Calu3 (cell line): ENCODE measurements at regions of chr11 and their contacts with region 1.

Region 1: DNA sequence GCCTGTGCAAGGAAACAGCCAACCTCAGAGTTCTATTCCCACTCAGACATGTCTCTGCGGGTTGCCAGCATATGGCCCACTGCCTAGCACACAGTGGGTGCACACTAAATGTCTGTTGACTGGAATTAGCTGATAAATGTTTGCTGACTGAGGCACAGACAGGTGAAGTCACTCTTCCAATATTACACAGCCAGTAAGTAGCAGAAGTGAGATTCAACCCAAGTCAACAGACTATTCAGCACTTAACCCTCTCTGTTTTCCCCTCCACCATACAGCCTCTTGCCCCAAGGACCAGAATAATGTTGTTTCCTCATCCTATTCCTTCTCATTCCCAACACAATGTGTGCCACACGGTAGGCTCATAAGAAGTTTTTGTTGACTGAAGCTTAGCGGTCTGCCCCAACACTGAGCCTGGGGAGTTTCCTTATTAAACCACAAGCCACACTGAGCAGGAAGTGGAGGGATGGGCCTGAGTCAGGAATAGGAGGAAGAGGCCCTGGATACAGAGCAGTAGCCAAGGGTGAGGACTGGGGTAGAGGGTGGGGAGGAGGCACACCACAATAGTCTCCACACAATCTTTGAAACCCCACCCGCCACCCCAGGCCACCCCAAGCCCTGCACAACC is 15.7 kb upstream of the IL10RA start:
- DNase-seq: peak; percentile 45
- H3K4me3 Mint-ChIP-seq: no peak overlapping the region
- H3K27ac Mint-ChIP-seq: no peak overlapping the region
- H3K4me1 Mint-ChIP-seq: peaks cover 9% of the 10 kb centered on the region
- H3K27me3 Mint-ChIP-seq: no peaks in the 10 kb centered on the region
- CTCF ChIP-seq: no peak

Region 2: DNA sequence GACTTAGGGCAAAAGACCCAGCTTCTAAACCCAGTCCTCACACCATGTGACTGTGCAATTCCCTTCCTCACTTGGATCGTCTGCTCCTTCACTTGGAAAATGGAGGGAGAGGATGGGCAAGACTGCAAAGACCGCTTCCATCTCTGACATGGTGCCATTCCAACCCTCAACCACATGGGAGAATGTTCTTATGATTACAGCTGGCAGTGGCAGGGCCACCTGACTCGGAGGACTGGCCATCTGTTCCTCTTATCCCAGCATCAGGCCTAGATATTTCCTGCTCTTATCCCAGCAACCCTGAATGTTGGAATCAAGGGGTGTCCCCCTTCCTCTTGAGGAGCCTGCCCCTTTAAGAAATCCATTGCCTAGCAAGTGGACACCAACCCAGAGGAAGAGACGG is 188.9 kb before region 1 on chr11:
- CTCF ChIA-PET with region 1: no interaction called
- intact Hi-C with region 1: no loop called
- DNase-seq: no peak
- H3K4me3 Mint-ChIP-seq: no peak overlapping the region
- H3K27ac Mint-ChIP-seq: no peak overlapping the region
- H3K4me1 Mint-ChIP-seq: no peaks in the 10 kb centered on the region
- H3K27me3 Mint-ChIP-seq: peaks cover 92% of the 10 kb centered on the region
- CTCF ChIP-seq: no peak

Region 3: DNA sequence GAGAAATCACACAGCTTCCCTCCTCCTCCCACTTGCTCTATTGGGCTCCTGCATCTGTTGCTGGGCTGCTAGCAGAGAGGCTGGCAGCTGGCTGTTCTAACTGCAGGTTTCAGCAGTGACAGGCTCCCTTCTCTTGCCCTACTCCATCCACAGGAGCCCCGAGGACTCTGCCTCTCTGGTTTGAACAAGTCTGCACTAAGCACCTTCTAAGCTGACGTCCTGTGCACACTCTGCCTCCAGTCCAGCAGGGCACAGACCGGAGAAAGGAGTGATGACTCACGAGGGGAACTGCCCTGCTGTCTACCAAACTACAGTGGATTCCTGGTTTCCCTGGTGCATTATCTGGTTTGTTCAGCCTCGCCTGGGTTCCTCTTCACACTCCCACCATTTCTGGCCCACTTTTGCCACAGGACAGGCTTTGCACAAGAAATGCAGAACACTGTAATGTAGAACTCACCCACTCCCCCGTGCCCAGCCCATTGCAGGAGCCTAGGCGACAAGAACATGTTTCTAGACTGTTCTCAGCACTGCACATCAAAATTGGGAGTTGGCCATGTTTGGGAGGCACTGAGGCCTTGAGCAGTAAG is 41.7 kb after region 1 on chr11:
- CTCF ChIA-PET with region 1: no interaction called
- intact Hi-C with region 1: loop called (anchors 2 kb)
- DNase-seq: peak; percentile 20
- H3K4me3 Mint-ChIP-seq: no peak overlapping the region
- H3K27ac Mint-ChIP-seq: no peak overlapping the region
- H3K4me1 Mint-ChIP-seq: no peaks in the 10 kb centered on the region
- H3K27me3 Mint-ChIP-seq: peaks cover 55% of the 10 kb centered on the region
- CTCF ChIP-seq: no peak

Region 4: GRCh38 chr11:118142809-118143208 is 172.3 kb after region 1 on chr11:
- CTCF ChIA-PET with region 1: no interaction called
- intact Hi-C with region 1: no loop called
- DNase-seq: no peak
- H3K4me3 Mint-ChIP-seq: no peak overlapping the region
- H3K27ac Mint-ChIP-seq: no peak overlapping the region
- H3K4me1 Mint-ChIP-seq: peaks cover 9% of the 10 kb centered on the region
- H3K27me3 Mint-ChIP-seq: peaks cover 74% of the 10 kb centered on the region
- CTCF ChIP-seq: no peak